B cell (primary cell): ENCODE measurements at regions of chr9 and their contacts with region 1.

Region 1: DNA sequence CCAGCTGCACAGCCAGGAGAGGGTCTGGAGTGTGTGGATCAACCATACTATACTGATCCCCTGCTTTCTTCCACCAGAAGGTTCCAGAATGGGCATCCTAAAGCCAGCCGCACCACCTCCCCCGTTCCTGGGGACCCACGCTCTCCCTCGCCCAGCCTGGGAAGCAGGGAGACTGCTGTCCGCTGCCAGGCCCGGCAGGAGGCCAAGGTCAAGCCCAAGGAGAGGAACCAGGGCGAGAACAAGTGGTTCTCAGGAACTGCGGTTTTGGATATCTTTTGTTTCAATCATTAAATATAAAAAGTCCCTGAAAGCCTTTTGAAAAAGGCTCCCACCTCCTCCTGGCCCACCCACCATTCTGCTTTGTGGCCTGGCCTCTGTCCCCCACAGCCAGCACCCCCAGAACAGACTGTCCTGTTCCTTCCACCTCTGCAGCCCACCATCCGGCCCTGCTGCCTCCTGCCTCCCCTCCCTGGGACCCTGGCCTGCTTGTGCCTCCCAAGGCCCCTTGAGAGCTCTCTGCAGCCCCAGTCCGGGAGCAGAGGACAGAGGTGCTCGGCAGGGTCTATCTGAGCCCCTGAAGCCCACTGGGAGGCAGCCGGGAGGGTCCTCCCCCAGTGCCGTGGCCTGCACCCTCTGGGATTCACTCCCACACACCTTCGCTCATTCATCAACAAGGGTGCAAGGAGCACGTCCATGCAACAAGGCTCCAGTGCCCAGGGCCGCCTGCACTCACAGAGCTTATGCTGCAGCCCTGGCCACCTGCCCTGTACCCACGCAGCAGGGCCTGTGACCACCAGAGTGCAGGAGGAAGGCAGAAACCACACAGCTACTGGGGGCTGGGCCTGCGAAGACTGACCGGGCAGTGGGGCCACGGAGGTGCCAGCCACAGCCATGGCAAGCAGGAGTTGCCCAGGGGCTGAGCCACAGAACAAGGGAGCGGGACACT is 614 bp upstream of the LCN6 start:
- DNase-seq: peak; percentile 53
- ATAC-seq: peak; percentile 25
- H3K4me3 ChIP-seq: peak overlapping the region in 1 of 5 experiments; percentile 4
- H3K4me3 Mint-ChIP-seq: peak overlapping the region; percentile 75
- H3K27ac ChIP-seq: peak overlapping the region; percentile 71 to 83
- H3K27ac Mint-ChIP-seq: peak overlapping the region; percentile 96
- H3K4me1 ChIP-seq: peaks cover 33 to 56% of the 10 kb centered on the region in 2 donors
- H3K4me1 Mint-ChIP-seq: peaks cover 58% of the 10 kb centered on the region
- H3K27me3 ChIP-seq: no peaks in the 10 kb centered on the region
- H3K27me3 Mint-ChIP-seq: no peaks in the 10 kb centered on the region
- CTCF ChIP-seq: no peak

Region 2: GRCh38 chr9:136545966-136546698 is 202.8 kb before region 1 on chr9 and contains the start of gene NOTCH1:
- CTCF ChIA-PET with region 1: no interaction called
- POLR2A ChIA-PET with region 1: no interaction called
- intact Hi-C with region 1: loop called (anchors 10 kb)
- DNase-seq: peak; percentile 93
- ATAC-seq: peak; percentile 72
- H3K4me3 ChIP-seq: peak within 1 kb of the TSS; percentile 51 to 88 (median 70)
- H3K4me3 Mint-ChIP-seq: peak within 1 kb of the TSS; percentile 92
- H3K27ac ChIP-seq: peak within 1 kb of the TSS; percentile 33 to 75
- H3K27ac Mint-ChIP-seq: peak within 1 kb of the TSS; percentile 94
- H3K4me1 ChIP-seq: peaks cover 30 to 44% of the 10 kb centered on the region in 2 donors
- H3K4me1 Mint-ChIP-seq: peaks cover 34% of the 10 kb centered on the region
- H3K27me3 ChIP-seq: no peaks in the 10 kb centered on the region
- H3K27me3 Mint-ChIP-seq: no peaks in the 10 kb centered on the region
- CTCF ChIP-seq: no peak
- total RNA-seq, gene NOTCH1: 38.5 and 40.6 TPM in 2 replicates